ENCODE measurements at regions of chr11 and their contacts with region 1.

Region 1: GRCh38 chr11:134124660-134125451 is 56.0 kb downstream of the JAM3 start:
- DNase-seq: no peak
- H3K4me3 Mint-ChIP-seq: peak overlapping the region; percentile 25
- H3K27ac Mint-ChIP-seq: no peak overlapping the region
- H3K4me1 Mint-ChIP-seq: peaks cover 16% of the 10 kb centered on the region
- H3K27me3 Mint-ChIP-seq: peaks cover 12% of the 10 kb centered on the region
- CTCF ChIP-seq: no peak

Region 2: DNA sequence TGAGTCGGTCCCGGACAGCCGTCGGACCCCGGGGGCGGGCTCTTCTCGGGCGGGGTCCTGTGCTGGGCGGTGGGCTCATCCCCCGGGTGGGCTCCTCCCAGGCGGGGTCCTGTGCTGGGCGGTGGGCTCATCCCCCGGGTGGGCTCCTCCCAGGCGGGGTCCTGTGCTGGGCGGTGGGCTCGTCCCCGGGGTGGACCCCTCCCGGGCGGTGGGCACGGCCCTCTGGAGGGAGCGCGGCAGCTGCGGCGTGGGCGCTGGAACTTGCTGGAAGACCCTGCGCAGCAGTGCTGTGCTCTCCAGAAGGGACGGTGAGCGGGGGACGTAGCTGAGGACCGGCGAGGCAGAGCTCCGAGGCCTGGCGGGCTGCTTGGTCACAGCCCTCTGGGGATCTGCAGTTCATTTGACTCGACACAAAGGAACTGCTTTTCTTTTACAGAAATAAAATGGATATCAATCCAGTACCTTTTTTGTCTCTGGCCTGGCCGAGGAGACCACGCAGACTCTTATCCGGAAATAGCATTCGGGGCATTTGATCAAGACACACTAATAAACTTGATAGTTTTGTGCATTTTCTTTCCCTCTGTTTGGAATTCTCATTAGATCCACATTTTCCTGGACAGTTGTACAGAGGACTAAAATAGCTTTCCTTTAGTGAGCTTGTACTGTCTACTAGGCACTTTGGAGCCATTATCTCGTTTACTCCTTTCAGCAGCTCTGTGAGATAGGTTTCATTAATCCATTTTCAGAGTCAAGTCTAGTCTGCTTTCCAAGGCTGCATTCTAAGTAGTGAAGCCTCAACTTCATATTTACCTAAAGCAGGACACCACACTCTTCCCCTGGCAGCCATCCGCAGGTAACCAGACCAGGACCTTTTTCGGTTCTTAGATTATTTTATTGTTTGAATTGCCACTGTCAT is 55.2 kb before region 1 on chr11:
- CTCF ChIA-PET with region 1: interaction called, 3 read pairs
- POLR2A ChIA-PET with region 1: interaction called, 18 read pairs
- intact Hi-C with region 1: no loop called
- DNase-seq: no peak
- H3K4me3 Mint-ChIP-seq: no peak overlapping the region
- H3K27ac Mint-ChIP-seq: no peak overlapping the region
- H3K4me1 Mint-ChIP-seq: no peaks in the 10 kb centered on the region
- H3K27me3 Mint-ChIP-seq: peaks cover 46% of the 10 kb centered on the region
- CTCF ChIP-seq: no peak

Region 3: DNA sequence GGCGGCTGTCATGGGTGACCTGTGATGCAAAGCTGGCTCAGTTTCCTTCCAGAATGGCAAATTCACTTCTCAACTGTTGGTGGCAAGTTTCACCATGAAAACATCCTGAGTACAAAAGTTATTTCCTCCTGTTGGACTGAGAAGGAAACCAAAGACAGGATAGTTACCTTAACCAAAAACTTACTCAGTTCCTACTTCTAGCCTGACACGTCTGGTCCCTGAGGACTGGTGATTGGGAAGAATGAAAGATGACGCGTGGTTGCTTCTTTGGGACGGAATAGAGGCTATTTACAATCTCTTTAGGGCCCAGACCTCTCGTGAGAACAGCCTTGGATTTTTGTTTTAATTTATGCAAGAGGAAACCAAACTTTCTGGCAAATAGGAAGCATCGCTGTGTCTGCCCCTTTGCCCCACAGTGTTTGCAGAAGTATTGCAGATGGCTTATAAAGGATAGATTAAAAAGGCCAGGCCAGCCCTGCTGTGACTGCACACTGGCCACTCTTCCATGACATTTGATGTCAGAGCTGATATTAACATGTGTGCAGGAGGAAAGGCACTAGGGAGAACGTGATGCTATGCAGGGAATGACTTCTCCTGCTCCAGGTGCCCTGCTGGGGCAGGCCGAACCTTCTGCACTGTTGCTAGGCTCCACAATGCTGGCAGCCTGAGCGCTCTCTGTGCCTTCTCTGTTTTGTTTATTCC is 107.3 kb after region 1 on chr11:
- CTCF ChIA-PET with region 1: no interaction called
- POLR2A ChIA-PET with region 1: no interaction called
- intact Hi-C with region 1: no loop called
- DNase-seq: no peak
- H3K4me3 Mint-ChIP-seq: no peak overlapping the region
- H3K27ac Mint-ChIP-seq: no peak overlapping the region
- H3K4me1 Mint-ChIP-seq: peaks cover 23% of the 10 kb centered on the region
- H3K27me3 Mint-ChIP-seq: no peaks in the 10 kb centered on the region
- CTCF ChIP-seq: no peak

Region 4: DNA sequence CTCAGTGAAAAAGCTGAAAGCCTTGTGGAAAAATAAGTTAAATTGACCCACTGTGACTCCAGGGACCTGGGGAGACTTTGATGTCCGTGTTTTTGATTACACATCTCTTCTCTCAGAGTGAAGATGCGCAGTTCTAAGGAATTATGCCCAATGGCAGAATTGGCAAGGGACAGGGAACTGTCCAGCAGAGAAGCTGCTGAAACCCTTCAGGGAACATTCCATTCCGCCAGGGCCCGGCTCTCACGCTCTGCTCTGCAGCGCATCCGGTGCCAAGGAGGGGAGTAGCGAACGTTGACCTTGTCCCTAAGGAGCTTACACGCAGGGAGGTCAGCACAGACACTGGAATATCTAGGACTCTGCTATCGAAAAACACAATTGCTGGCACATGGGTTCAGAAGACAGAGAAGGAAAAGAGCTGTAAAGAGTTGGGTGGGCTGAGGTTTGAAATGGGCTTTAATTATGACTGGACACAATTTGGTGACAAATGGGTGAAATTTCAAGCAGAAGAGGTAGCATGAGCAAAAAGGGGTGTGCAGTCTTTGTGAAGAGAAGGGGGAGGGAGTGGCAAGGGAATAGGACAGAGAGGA is 351.7 kb after region 1 on chr11:
- CTCF ChIA-PET with region 1: no interaction called
- POLR2A ChIA-PET with region 1: no interaction called
- intact Hi-C with region 1: no loop called
- DNase-seq: peak; percentile 16
- H3K4me3 Mint-ChIP-seq: no peak overlapping the region
- H3K27ac Mint-ChIP-seq: no peak overlapping the region
- H3K4me1 Mint-ChIP-seq: no peaks in the 10 kb centered on the region
- H3K27me3 Mint-ChIP-seq: no peaks in the 10 kb centered on the region
- CTCF ChIP-seq: no peak

Measured in MCF 10A (cell line).